Caco-2 (cell line): ENCODE measurements at regions of chr5 and their contacts with region 1.

Region 1: GRCh38 chr5:117454716-117455596 is 880.3 kb upstream of the SEMA6A start:
- DNase-seq: peak; percentile 88 to 90
- H3K4me3 ChIP-seq: peak overlapping the region; percentile 68
- H3K4me3 Mint-ChIP-seq: peak overlapping the region; percentile 85
- H3K27ac Mint-ChIP-seq: peak overlapping the region; percentile 26
- H3K4me1 ChIP-seq: peaks cover 5% of the 10 kb centered on the region; the same call in 1 of the 2 replicates
- H3K4me1 Mint-ChIP-seq: peaks cover 6% of the 10 kb centered on the region
- H3K27me3 ChIP-seq: no peaks in the 10 kb centered on the region; the same call in 1 of the 2 replicates
- H3K27me3 Mint-ChIP-seq: peaks cover 3% of the 10 kb centered on the region
- CTCF ChIP-seq: peak; percentile 88 to 91

Region 2: GRCh38 chr5:117077142-117077541 is 377.8 kb before region 1 on chr5:
- CTCF ChIA-PET with region 1: no interaction called
- POLR2A ChIA-PET with region 1: no interaction called
- intact Hi-C with region 1: loop called (anchors 5 kb)
- DNase-seq: peak in 1 of 2 experiments; percentile 13
- H3K4me3 ChIP-seq: no peak overlapping the region
- H3K4me3 Mint-ChIP-seq: no peak overlapping the region
- H3K27ac Mint-ChIP-seq: no peak overlapping the region
- H3K4me1 ChIP-seq: no peaks in the 10 kb centered on the region
- H3K4me1 Mint-ChIP-seq: no peaks in the 10 kb centered on the region
- H3K27me3 ChIP-seq: no peaks in the 10 kb centered on the region
- H3K27me3 Mint-ChIP-seq: no peaks in the 10 kb centered on the region
- CTCF ChIP-seq: peak; percentile 41 to 59

Region 3: GRCh38 chr5:117486869-117487472 is 32.0 kb after region 1 on chr5:
- CTCF ChIA-PET with region 1: interaction called, 44 read pairs
- POLR2A ChIA-PET with region 1: interaction called, 3 read pairs
- intact Hi-C with region 1: loop called (anchors 1 kb)
- DNase-seq: peak; percentile 71 to 80
- H3K4me3 ChIP-seq: no peak overlapping the region
- H3K4me3 Mint-ChIP-seq: no peak overlapping the region
- H3K27ac Mint-ChIP-seq: peak overlapping the region; percentile 40
- H3K4me1 ChIP-seq: peaks cover 28% of the 10 kb centered on the region
- H3K4me1 Mint-ChIP-seq: peaks cover 31% of the 10 kb centered on the region
- H3K27me3 ChIP-seq: no peaks in the 10 kb centered on the region
- H3K27me3 Mint-ChIP-seq: no peaks in the 10 kb centered on the region
- CTCF ChIP-seq: no peak

Region 4: GRCh38 chr5:117559005-117559844 is 104.3 kb after region 1 on chr5:
- CTCF ChIA-PET with region 1: no interaction called
- POLR2A ChIA-PET with region 1: no interaction called
- intact Hi-C with region 1: loop called (anchors 10 kb)
- DNase-seq: no peak
- H3K4me3 ChIP-seq: no peak overlapping the region
- H3K4me3 Mint-ChIP-seq: no peak overlapping the region
- H3K27ac Mint-ChIP-seq: no peak overlapping the region
- H3K4me1 ChIP-seq: no peaks in the 10 kb centered on the region
- H3K4me1 Mint-ChIP-seq: peaks cover 7% of the 10 kb centered on the region
- H3K27me3 ChIP-seq: no peaks in the 10 kb centered on the region
- H3K27me3 Mint-ChIP-seq: no peaks in the 10 kb centered on the region
- CTCF ChIP-seq: no peak

Region 5: DNA sequence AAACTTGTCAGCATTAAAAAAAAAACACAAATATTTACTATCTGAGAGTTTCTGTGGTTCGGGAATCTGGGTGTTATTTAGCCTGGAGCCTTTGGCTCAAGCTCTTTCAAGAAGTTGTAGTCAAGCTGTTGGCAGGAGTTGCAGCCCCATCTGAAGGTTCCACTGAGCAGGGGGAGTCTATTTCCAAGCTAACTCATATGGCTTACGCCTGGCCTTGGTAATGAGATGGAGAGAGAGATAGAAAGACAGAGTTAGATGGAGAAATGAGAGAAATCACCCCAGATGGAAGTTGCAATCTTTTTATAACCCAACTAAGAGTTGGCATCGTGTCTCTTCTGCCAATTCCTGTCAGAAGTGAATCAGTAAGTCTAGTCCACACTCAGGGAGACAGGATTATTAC is 194.9 kb after region 1 on chr5:
- CTCF ChIA-PET with region 1: no interaction called
- POLR2A ChIA-PET with region 1: no interaction called
- intact Hi-C with region 1: loop called (anchors 10 kb)
- DNase-seq: no peak
- H3K4me3 ChIP-seq: no peak overlapping the region
- H3K4me3 Mint-ChIP-seq: no peak overlapping the region
- H3K27ac Mint-ChIP-seq: no peak overlapping the region
- H3K4me1 ChIP-seq: no peaks in the 10 kb centered on the region
- H3K4me1 Mint-ChIP-seq: no peaks in the 10 kb centered on the region
- H3K27me3 ChIP-seq: no peaks in the 10 kb centered on the region
- H3K27me3 Mint-ChIP-seq: peaks cover 6% of the 10 kb centered on the region
- CTCF ChIP-seq: no peak

Region 6: GRCh38 chr5:118042076-118042475 is 587.1 kb after region 1 on chr5:
- CTCF ChIA-PET with region 1: no interaction called
- POLR2A ChIA-PET with region 1: no interaction called
- intact Hi-C with region 1: loop called (anchors 1 kb)
- DNase-seq: no peak
- H3K4me3 ChIP-seq: no peak overlapping the region
- H3K4me3 Mint-ChIP-seq: no peak overlapping the region
- H3K27ac Mint-ChIP-seq: no peak overlapping the region
- H3K4me1 ChIP-seq: no peaks in the 10 kb centered on the region
- H3K4me1 Mint-ChIP-seq: no peaks in the 10 kb centered on the region
- H3K27me3 ChIP-seq: no peaks in the 10 kb centered on the region
- H3K27me3 Mint-ChIP-seq: peaks cover 4% of the 10 kb centered on the region
- CTCF ChIP-seq: peak; percentile 22 to 40

Region 7: DNA sequence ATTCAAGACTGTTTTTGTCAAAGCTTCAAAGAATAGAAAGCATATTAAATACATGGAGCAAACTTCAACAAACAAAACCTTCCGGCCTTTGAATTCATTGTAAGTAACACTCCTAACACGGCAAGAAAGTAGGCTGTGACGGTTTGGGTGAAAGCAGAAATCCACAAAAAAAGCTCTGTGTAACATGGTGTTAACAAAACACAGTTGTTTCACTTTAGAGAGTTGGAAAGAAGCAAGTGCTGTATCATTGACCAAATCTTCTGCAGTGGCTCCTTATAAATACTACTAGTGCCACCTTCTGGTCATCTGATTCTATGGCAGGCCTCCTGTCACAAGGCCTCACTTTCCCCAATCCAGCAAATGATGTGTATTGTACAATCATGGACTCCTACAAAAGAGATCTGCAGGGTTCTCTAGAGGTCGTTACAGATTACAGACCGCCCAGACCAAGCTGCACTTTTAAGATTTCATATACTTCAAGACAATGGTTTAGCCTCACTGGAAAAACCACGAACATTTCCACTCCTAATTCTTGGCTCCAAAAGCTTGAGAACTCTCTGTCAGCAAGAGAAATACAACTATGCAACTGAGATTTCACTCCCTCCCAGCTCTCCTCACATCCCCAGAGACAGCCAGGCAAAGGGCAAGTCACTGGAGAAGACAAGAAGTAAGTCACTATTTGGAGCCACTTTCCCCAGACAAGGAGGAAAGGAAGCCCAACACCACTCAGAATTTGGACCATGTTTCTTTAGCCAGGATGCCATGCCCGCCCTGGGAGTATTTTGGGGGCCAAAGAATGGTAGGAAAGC is 1337.2 kb after region 1 on chr5:
- CTCF ChIA-PET with region 1: no interaction called
- POLR2A ChIA-PET with region 1: no interaction called
- intact Hi-C with region 1: loop called (anchors 10 kb)
- DNase-seq: peak; percentile 44 to 55
- H3K4me3 ChIP-seq: no peak overlapping the region
- H3K4me3 Mint-ChIP-seq: no peak overlapping the region
- H3K27ac Mint-ChIP-seq: no peak overlapping the region
- H3K4me1 ChIP-seq: no peaks in the 10 kb centered on the region
- H3K4me1 Mint-ChIP-seq: no peaks in the 10 kb centered on the region
- H3K27me3 ChIP-seq: no peaks in the 10 kb centered on the region
- H3K27me3 Mint-ChIP-seq: peaks cover 7% of the 10 kb centered on the region
- CTCF ChIP-seq: peak; percentile 80 to 83